Right ventricle myocardium superior (tissue), 1 donor: ENCODE measurements at regions of chr21 and their contacts with region 1.

Region 1: DNA sequence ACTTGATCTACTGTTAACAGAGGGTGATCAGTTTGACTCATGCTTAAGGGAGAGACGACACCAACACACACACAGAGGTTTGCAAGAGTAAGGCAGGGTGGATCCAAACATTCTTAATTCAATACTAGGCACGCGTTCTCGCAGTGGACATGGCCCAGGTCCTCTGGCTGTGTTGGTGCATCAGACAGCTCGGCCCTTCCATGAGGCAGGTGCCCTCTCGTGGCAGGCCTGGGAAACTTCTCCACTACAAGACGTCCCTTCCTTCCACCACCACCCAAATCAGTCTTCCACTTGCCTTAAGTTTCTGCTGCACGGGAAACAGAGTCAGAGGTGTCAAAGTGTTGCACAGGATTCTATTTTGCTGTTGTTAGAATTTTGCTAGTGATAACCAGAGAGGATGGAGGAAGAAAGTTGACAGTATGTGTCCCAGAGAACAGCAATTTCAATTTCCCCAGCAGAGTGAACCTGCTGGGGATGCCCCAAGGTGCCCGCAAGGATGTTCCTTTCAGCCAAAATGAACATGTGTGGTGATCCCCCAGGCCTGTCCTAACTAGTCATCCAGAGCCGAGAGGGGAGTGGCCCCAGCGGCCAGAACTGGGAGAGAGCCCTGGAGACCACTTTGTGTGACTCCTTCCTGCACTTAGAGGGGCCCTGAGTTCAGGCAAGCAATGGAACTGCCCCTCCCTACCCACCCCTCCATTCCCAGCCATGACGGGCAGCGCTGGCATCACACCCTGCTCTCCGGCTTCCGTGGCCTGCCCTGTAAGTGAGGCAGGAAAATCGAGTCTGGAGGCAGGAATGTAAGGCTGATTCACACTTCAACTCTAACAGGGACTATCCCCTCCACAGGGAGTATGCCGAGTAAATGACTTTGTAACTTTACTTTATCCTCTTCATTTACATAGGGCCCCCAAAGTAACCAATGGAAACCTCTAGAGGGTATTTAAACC is 34.8 kb downstream of the MX1 start:
- DNase-seq: peak; percentile 85
- ATAC-seq: peak; percentile 95

Region 2: DNA sequence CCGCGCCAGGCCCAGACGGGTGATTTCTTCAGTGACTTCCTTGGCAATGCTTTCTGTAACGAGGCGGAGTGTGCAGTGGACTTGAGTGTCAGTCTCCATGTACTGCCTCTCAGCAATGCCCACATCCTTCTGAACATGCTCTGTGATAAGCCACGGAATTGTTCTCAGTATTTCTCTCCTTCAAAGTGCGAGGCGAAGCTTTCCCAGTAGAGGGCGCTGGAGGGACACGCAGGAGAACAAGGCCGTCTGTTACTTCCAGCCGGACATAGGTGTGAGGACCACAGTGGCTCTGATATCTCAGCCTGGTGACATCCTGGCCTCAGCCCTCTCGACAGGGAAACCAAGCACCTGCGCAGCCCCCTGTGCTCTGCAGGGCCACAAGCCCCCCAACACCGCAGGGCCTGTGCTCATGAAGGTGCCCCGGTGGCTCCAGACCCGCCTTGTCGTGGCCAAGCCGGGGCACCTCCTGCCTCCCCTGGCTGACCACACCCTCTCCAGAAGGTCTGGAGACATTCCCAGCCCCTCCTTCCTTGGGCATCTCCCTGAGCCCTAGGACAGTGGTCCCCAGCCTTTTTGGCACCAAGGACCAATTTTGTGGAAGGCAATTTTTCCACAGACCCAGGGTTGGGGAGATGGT is 338.9 kb before region 1 on chr21:
- intact Hi-C with region 1: loop called (anchors 10 kb)
- DNase-seq: peak; percentile 86
- ATAC-seq: peak; percentile 87

Region 3: GRCh38 chr21:41283211-41283818 is 177.5 kb before region 1 on chr21:
- intact Hi-C with region 1: loop called (anchors 5 kb)
- DNase-seq: no peak
- ATAC-seq: peak; percentile 93

Region 4: GRCh38 chr21:41294539-41295231 is 166.2 kb before region 1 on chr21:
- intact Hi-C with region 1: no loop called
- DNase-seq: no peak
- ATAC-seq: no peak